ENCODE measurements at regions of chr1 and their contacts with region 1.

Region 1: GRCh38 chr1:192477630-192478029 is 97.9 kb upstream of the RGS1 start:
- DNase-seq: peak in 4 of 5 donors; percentile 47 to 52 (median 48)
- H3K4me3 ChIP-seq: no peak overlapping the region
- H3K4me3 Mint-ChIP-seq: no peak overlapping the region
- H3K27ac ChIP-seq: no peak overlapping the region
- H3K27ac Mint-ChIP-seq: peak overlapping the region in 1 of 7 donors; percentile 19
- H3K4me1 ChIP-seq: no peaks in the 10 kb centered on the region
- H3K4me1 Mint-ChIP-seq: no peaks in the 10 kb centered on the region
- H3K27me3 ChIP-seq: no peaks in the 10 kb centered on the region
- H3K27me3 Mint-ChIP-seq: peaks cover 0 to 6% of the 10 kb centered on the region in 2 donors

Region 2: GRCh38 chr1:192496371-192497056 is 18.9 kb after region 1 on chr1:
- CTCF ChIA-PET with region 1: interaction called, 12 read pairs
- POLR2A ChIA-PET with region 1: no interaction called
- intact Hi-C with region 1: no loop called
- DNase-seq: no peak
- H3K4me3 ChIP-seq: no peak overlapping the region
- H3K4me3 Mint-ChIP-seq: no peak overlapping the region
- H3K27ac ChIP-seq: no peak overlapping the region
- H3K27ac Mint-ChIP-seq: no peak overlapping the region
- H3K4me1 ChIP-seq: no peaks in the 10 kb centered on the region
- H3K4me1 Mint-ChIP-seq: no peaks in the 10 kb centered on the region
- H3K27me3 ChIP-seq: no peaks in the 10 kb centered on the region
- H3K27me3 Mint-ChIP-seq: no peaks in the 10 kb centered on the region

Region 3: GRCh38 chr1:192580351-192580962 is 102.8 kb after region 1 on chr1:
- CTCF ChIA-PET with region 1: interaction called, 221 read pairs
- POLR2A ChIA-PET with region 1: interaction called, 13 read pairs
- intact Hi-C with region 1: loop called (anchors 1 kb)
- DNase-seq: peak in 4 of 5 donors; percentile 29 to 51 (median 42)
- H3K4me3 ChIP-seq: no peak overlapping the region
- H3K4me3 Mint-ChIP-seq: no peak overlapping the region
- H3K27ac ChIP-seq: no peak overlapping the region
- H3K27ac Mint-ChIP-seq: peak overlapping the region in 2 of 7 donors; percentile 8 to 23
- H3K4me1 ChIP-seq: peaks cover 46% of the 10 kb centered on the region
- H3K4me1 Mint-ChIP-seq: peaks cover 28 to 45% (median 35%) of the 10 kb centered on the region in 4 donors
- H3K27me3 ChIP-seq: no peaks in the 10 kb centered on the region
- H3K27me3 Mint-ChIP-seq: peaks cover 0 to 2% of the 10 kb centered on the region in 2 donors

Region 4: GRCh38 chr1:192609110-192610079 is 131.8 kb after region 1 on chr1:
- CTCF ChIA-PET with region 1: interaction called, 155 read pairs
- POLR2A ChIA-PET with region 1: interaction called, 4 read pairs
- intact Hi-C with region 1: loop called (anchors 1 kb)
- DNase-seq: peak; percentile 55 to 79 (median 71)
- H3K4me3 ChIP-seq: no peak overlapping the region
- H3K4me3 Mint-ChIP-seq: peak overlapping the region; percentile 33 to 76 (median 66)
- H3K27ac ChIP-seq: peak overlapping the region; percentile 0
- H3K27ac Mint-ChIP-seq: peak overlapping the region; percentile 6 to 90 (median 85)
- H3K4me1 ChIP-seq: peaks cover 15% of the 10 kb centered on the region
- H3K4me1 Mint-ChIP-seq: peaks cover 12 to 18% (median 15%) of the 10 kb centered on the region in 4 donors
- H3K27me3 ChIP-seq: no peaks in the 10 kb centered on the region
- H3K27me3 Mint-ChIP-seq: no peaks in the 10 kb centered on the region

Region 5: DNA sequence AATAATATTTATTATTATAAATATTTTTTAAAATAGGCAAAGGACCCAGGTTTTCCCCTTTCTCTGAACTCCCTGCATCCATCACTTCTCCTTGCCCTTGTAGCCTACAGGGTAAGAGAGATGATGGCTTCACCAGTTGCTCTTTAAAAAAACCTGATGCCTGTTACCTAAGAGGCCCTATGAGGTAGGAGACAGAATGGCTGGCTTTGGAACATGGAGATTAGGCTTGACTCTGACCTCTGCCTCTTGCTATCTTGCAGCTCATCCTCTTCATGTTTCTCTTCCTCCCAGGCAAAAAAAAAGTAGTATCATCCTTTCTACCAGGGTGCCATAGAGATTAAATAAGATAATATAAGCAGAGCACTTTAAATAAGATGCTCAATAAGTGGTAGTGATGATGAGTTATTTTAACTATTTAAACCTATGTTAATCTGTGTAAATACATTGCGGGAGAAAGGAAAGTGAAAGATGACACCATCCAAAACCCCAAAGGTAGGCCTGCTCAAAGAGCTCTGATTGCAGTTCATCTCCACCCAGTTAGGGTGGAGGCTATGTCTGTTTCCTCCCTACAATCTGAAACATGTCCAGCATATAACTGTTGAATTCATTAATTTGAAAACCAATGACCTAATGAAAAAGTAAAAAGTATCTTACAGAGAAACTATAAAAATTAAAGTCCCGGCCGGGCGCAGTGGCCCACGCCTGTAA is 383.0 kb after region 1 on chr1:
- CTCF ChIA-PET with region 1: no interaction called
- POLR2A ChIA-PET with region 1: no interaction called
- intact Hi-C with region 1: no loop called
- DNase-seq: no peak
- H3K4me3 ChIP-seq: no peak overlapping the region
- H3K4me3 Mint-ChIP-seq: no peak overlapping the region
- H3K27ac ChIP-seq: no peak overlapping the region
- H3K27ac Mint-ChIP-seq: no peak overlapping the region
- H3K4me1 ChIP-seq: no peaks in the 10 kb centered on the region
- H3K4me1 Mint-ChIP-seq: no peaks in the 10 kb centered on the region
- H3K27me3 ChIP-seq: no peaks in the 10 kb centered on the region
- H3K27me3 Mint-ChIP-seq: no peaks in the 10 kb centered on the region

Region 6: GRCh38 chr1:193121616-193122593 is 644.3 kb after region 1 on chr1 and contains the start of gene CDC73:
- CTCF ChIA-PET with region 1: interaction called, 3 read pairs
- POLR2A ChIA-PET with region 1: interaction called, 3 read pairs
- intact Hi-C with region 1: loop called (anchors 1 kb)
- DNase-seq: peak; percentile 98 to 100 (median 99)
- H3K4me3 ChIP-seq: peak within 1 kb of the TSS; percentile 68 to 89
- H3K4me3 Mint-ChIP-seq: peak within 1 kb of the TSS; percentile 90 to 98 (median 94)
- H3K27ac ChIP-seq: peak within 1 kb of the TSS; percentile 80
- H3K27ac Mint-ChIP-seq: peak within 1 kb of the TSS; percentile 93 to 98 (median 98)
- H3K4me1 ChIP-seq: peaks cover 45% of the 10 kb centered on the region
- H3K4me1 Mint-ChIP-seq: peaks cover 27 to 72% (median 43%) of the 10 kb centered on the region in 4 donors
- H3K27me3 ChIP-seq: no peaks in the 10 kb centered on the region
- H3K27me3 Mint-ChIP-seq: no peaks in the 10 kb centered on the region
- total RNA-seq, gene CDC73: 70.4 to 75.0 TPM

Measured in CD4-positive, alpha-beta memory T cell (primary cell).